HEK293T (cell line): ENCODE measurements at regions of chr2 and their contacts with region 1.

Region 1: GRCh38 chr2:44918095-44918775 is 23.3 kb upstream of the SIX3 start:
- DNase-seq: no peak

Region 2: DNA sequence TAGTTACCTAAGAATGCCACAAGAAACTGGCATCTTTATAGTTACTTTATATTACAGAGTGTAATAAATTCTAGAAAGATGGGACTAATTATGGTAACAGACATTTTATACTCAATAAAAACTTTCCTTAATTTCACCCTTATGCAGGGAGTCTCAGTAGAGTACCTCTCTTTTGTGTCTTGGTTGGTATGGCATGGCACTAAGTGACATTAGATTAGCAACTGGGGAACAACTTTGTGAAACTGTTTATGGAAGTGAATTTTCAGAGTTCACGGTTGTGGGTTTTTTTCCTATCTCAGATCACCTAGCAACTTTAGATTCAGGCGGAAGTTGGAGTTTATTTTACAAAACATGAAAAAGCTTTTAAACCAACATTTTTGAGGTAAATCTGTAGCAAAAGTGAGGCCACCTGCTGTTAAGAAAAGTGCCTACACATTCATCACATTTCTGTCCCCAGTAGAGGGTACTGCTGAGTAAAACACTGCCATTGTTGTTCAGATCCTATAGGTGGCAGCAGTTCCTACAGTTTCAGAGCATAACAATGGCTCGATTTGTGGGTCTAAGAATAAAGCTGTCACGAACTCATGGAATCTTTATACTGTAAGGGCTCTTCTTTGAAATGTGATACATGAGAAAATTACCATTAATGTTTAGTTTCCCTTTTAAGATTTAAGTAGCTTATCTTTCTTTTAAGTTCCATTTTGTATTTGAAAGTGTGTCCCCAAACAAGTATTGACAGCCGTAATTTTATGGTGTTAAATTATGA is 438.9 kb before region 1 on chr2:
- CTCF ChIA-PET with region 1: interaction called, 16 read pairs
- POLR2A ChIA-PET with region 1: no interaction called
- DNase-seq: peak; percentile 72

Region 3: DNA sequence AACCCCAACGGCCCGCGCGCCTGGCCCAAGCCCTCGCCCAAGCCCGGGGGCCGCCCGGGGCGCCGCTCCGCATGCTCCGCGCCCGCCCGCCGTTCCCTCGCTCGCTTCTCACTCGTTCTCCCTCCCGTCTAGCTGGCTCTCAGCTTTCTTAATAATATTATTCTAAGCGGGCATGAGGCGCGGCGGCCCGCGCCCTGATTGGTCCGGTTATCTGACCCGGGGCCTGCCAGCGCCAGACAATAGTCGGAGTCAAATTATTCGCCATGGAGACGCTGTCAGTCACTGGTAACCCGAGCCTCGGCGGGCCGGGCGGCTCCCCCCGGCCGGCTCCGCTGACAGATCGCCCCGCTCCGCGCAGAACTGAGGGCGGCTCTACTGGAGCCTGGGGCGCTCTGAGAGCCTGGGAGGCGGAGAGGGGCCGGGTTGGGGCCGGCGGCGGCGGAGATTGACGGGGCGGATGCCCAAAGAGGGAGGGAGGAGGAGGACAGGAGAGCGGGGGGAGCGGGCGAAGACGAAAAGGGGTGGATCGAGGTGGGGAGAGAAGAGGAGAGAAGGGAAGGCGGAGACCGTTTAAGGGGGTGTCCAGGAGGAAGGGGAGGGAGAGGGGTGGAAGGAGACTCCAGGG is 91.2 kb after region 1 on chr2 and contains the start of gene SIX2:
- CTCF ChIA-PET with region 1: no interaction called
- POLR2A ChIA-PET with region 1: no interaction called
- DNase-seq: peak; percentile 94